ENCODE measurements at regions of chr12 and their contacts with region 1.

Region 1: GRCh38 chr12:46209914-46210872 is 58.6 kb downstream of the SLC38A1 start:
- DNase-seq: peak; percentile 87
- H3K4me3 Mint-ChIP-seq: peak overlapping the region; percentile 60
- H3K27ac Mint-ChIP-seq: peak overlapping the region; percentile 99
- H3K4me1 Mint-ChIP-seq: peaks cover 84% of the 10 kb centered on the region
- H3K27me3 Mint-ChIP-seq: no peaks in the 10 kb centered on the region

Region 2: DNA sequence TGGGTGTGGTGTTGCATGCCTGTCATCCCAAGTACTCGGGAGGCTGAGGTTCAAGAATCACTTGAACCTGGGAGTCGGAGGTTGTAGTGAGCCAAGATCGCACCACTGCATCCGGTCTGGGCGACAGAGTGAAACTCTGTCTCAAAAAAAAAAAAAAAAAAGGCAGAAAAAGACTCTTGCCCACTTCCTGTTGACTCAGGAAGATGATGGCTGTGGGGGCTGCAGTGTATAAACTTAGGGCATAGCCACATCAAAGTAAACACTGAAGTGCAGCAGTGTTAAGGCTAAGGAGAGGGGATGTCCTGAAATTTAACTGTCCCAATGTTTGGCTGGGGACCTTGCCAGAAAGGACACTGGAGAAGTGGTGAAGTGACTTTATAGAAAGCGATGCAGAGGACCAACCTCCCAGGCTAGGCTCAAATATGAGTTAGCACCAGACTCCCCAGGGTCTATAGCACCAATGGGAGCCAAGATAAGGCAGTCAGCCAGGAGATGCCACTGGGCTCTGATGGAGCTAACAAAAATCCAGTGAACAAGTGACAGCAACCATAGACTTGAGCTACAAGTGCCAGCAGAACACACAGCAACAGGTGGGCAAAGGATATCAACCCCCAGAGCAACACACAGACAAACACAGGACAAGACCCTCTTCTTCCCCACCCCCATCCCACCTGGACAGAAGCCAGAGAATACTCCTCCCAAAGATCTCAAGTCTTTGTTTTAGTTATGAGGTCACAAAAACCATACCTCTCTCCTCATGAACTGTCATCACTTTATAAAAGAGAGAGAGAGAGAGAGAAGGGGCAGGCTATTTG is 1362.1 kb before region 1 on chr12:
- CTCF ChIA-PET with region 1: no interaction called
- intact Hi-C with region 1: loop called (anchors 10 kb)
- DNase-seq: peak; percentile 79
- H3K4me3 Mint-ChIP-seq: peak overlapping the region; percentile 55
- H3K27ac Mint-ChIP-seq: peak overlapping the region; percentile 94
- H3K4me1 Mint-ChIP-seq: peaks cover 72% of the 10 kb centered on the region
- H3K27me3 Mint-ChIP-seq: no peaks in the 10 kb centered on the region

Region 3: DNA sequence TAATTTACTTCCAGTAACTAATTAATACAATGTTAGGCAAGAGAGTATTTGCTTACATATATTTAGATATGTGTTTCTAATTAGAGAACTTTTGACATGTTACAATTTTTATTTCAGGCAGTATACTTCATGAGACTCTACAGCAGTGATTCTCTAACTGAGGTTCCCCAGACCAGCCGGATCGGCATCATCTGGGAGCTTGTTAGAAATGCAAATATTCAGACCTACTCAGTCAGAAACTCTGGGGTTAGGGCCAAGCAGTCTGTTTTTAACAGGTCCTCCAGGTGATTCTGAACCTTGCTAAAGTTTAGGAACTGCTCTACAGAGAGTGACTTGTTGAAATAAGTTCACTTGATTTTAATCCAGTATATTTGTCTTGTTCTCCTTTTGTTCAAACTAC is 434.2 kb before region 1 on chr12:
- CTCF ChIA-PET with region 1: no interaction called
- intact Hi-C with region 1: no loop called
- DNase-seq: no peak
- H3K4me3 Mint-ChIP-seq: no peak overlapping the region
- H3K27ac Mint-ChIP-seq: no peak overlapping the region
- H3K4me1 Mint-ChIP-seq: peaks cover 34% of the 10 kb centered on the region
- H3K27me3 Mint-ChIP-seq: no peaks in the 10 kb centered on the region

Region 4: DNA sequence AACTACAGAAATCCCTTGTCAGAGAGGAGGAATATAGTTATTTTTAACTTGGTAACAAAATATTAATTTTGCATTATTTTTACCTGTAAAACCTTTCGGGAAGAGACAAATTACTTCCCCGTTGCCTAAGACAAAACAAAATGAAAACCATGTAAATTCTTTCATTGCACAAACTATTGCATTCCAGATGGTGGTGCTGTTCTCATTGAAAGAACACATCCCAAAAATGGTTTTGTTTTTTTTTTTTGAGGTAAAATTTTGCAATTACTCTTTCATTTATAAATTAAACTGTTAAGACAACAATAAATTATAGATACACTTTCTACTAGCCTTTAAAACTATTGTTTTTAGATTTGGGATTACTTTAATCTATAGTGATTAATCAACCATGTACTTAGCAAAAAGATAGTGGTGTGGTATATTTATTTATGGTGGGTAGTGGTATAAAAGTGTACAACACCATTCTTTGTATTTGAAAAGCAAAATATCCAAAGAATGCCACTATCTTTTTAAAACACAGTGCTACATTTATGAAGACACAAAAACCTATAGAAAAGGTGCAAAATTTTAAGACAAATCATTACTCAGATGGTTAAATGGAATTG is 56.8 kb before region 1 on chr12:
- CTCF ChIA-PET with region 1: no interaction called
- intact Hi-C with region 1: loop called (anchors 2 kb)
- DNase-seq: no peak
- H3K4me3 Mint-ChIP-seq: no peak overlapping the region
- H3K27ac Mint-ChIP-seq: no peak overlapping the region
- H3K4me1 Mint-ChIP-seq: peaks cover 12% of the 10 kb centered on the region
- H3K27me3 Mint-ChIP-seq: peaks cover under 1% of the 10 kb centered on the region

Region 5: DNA sequence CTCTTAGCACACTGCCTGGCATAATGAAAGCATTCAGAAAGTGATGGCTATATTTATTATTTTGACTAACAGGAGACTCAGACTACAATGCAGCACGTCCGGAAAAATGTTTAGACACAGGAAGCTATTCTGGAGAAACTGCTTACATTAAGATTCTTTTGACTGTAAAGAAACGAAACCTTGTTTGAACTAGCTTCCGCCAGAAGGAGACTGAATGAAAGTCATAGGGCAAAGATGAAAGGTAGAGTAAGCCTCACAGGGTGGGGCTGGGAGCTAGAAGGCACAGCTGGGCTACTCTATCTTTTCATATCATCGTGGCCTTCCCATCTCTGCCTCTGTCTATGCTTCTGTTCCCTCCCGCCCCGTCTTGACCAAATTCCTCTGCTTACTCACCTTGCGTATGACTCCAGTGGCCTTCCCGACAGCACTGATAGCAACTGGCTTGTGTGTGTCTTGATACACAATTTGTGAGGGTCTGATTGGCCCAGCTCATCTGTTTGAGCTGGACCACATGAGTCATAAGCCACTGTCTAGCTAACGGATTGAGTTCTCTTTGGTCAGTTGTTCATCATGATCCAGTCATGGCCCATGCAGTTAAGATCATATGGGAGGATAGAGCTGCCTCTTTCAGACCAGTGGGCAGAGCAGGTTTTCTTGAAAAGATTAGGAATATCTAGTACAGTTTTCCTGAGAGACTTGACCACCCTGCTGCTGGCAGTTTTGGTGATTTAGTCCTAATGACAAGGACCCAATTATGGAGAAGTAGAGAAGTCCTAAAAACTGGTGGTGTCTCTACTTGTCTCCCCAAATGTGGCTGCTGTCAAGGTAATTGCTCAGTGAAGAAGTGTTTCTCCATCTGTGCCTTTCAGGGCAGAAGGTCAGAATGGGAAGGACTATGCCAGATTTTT is 313.9 kb after region 1 on chr12:
- CTCF ChIA-PET with region 1: no interaction called
- intact Hi-C with region 1: loop called (anchors 5 kb)
- DNase-seq: peak; percentile 76
- H3K4me3 Mint-ChIP-seq: peak overlapping the region; percentile 61
- H3K27ac Mint-ChIP-seq: peak overlapping the region; percentile 81
- H3K4me1 Mint-ChIP-seq: peaks cover 38% of the 10 kb centered on the region
- H3K27me3 Mint-ChIP-seq: no peaks in the 10 kb centered on the region

Region 6: DNA sequence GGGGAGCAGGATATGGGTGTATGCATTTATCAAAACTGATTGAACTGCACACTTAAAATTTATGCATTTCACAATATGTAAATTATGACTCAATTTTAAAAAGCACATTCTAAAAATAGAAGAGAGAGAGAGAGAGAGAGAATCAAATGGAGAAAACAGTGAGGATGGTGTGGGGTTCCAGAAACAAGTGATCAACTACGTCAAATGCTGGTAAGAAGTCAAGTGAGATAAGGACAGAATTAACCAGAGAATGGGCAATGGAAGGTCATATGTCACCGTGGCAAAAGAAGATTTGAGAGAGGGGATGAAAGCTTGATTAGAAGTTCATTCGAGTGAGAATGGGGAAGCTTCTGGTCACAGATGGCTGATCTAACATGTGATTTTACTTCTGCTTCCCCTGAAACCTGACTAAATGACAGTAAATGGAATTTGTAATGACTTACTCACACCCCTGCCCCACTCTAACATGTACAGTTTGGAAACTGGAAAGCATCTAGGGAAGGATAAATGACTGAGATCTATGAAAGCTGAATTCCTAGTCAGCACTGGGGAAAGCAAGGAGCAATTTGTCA is 1146.0 kb after region 1 on chr12:
- CTCF ChIA-PET with region 1: no interaction called
- intact Hi-C with region 1: loop called (anchors 10 kb)
- DNase-seq: peak; percentile 72
- H3K4me3 Mint-ChIP-seq: peak overlapping the region; percentile 64
- H3K27ac Mint-ChIP-seq: peak overlapping the region; percentile 100
- H3K4me1 Mint-ChIP-seq: peaks cover 82% of the 10 kb centered on the region
- H3K27me3 Mint-ChIP-seq: no peaks in the 10 kb centered on the region

Region 7: GRCh38 chr12:47812797-47813510 is 1602.8 kb after region 1 on chr12:
- CTCF ChIA-PET with region 1: no interaction called
- intact Hi-C with region 1: loop called (anchors 2 kb)
- DNase-seq: peak; percentile 99
- H3K4me3 Mint-ChIP-seq: peak overlapping the region; percentile 88
- H3K27ac Mint-ChIP-seq: peak overlapping the region; percentile 98
- H3K4me1 Mint-ChIP-seq: peaks cover 75% of the 10 kb centered on the region
- H3K27me3 Mint-ChIP-seq: no peaks in the 10 kb centered on the region